OCI-LY7 (cell line): ENCODE measurements at regions of chr20 and their contacts with region 1.

Region 1: DNA sequence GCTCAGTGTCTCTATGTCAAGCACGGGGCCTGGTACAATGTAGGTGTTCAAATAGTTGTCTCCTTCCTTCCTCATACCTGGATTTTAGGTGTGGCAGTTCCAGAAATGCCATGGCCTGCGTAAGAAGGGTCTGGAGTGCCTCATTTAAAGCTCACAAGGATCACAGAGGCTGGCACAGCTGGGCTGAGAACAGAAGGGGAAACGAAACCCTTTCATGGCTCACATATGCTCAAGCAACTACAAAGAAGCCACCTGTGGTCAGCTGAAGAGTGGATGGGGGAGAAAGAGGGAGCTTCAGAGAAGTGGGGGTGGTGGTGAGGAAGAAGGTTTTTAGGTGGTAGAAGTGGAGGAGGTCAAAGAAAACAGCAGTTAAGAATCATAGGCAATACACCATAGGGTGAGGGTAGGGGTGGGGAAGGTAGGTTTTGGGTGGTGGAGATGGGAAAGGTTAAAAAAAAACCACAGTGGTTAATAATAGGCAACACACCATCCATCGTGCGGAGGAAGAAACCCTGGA is 17.0 kb upstream of the TOP1 start:
- DNase-seq: peak; percentile 99
- H3K4me3 ChIP-seq: peak overlapping the region; percentile 60
- H3K27ac ChIP-seq: peak overlapping the region; percentile 99
- H3K4me1 ChIP-seq: peaks cover 89% of the 10 kb centered on the region
- CTCF ChIP-seq: no peak

Region 2: GRCh38 chr20:40781327-40782042 is 230.1 kb before region 1 on chr20:
- CTCF ChIA-PET with region 1: no interaction called
- POLR2A ChIA-PET with region 1: no interaction called
- intact Hi-C with region 1: no loop called
- DNase-seq: no peak
- H3K4me3 ChIP-seq: no peak overlapping the region
- H3K27ac ChIP-seq: no peak overlapping the region
- H3K4me1 ChIP-seq: peaks cover 29% of the 10 kb centered on the region
- CTCF ChIP-seq: no peak

Region 3: GRCh38 chr20:40938020-40938419 is 73.6 kb before region 1 on chr20:
- CTCF ChIA-PET with region 1: no interaction called
- POLR2A ChIA-PET with region 1: no interaction called
- intact Hi-C with region 1: loop called (anchors 5 kb)
- DNase-seq: peak; percentile 45
- H3K4me3 ChIP-seq: no peak overlapping the region
- H3K27ac ChIP-seq: no peak overlapping the region
- H3K4me1 ChIP-seq: peaks cover 70% of the 10 kb centered on the region
- CTCF ChIP-seq: peak; percentile 76

Region 4: DNA sequence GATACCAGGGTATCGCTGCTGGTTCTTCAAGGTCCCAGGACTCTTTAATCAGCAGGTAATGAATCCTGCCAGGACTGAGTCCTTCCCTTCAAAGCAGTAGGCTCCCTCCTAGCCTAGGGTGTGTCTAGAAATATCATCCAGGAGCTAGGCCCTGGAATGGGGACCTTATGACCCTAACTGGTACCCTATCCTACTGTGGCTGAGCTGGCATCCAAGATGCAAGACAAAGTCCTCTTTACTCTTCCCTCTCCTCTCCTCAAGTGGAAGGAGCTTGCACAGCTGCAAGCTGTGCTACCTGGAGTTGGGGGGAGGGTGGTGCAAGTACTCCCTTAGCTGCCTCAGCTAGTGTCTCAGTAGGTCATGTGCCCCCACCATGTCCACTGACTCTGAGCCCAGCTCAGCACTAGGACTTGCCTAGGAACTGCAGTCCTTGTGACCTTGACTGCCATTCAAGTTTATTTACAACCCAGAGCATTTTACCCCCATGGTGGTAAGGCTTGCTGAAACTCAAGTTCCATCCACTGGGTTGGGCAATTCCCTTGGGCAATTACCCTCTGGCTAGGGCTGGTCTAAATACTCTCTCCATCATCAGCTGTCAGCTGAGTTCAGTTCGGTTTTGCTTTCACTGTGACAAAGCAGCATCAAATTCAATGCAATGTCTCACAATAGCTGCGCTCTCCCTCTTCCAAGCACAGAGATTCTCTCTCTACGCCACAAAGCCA is 31.3 kb before region 1 on chr20:
- CTCF ChIA-PET with region 1: interaction called, 3 read pairs
- POLR2A ChIA-PET with region 1: interaction called, 7 read pairs
- intact Hi-C with region 1: loop called (anchors 1 kb)
- DNase-seq: no peak
- H3K4me3 ChIP-seq: no peak overlapping the region
- H3K27ac ChIP-seq: no peak overlapping the region
- H3K4me1 ChIP-seq: peaks cover 45% of the 10 kb centered on the region
- CTCF ChIP-seq: no peak

Region 5: GRCh38 chr20:41023544-41023943 is 11.9 kb after region 1 on chr20:
- CTCF ChIA-PET with region 1: interaction called, 3 read pairs
- POLR2A ChIA-PET with region 1: interaction called, 26 read pairs
- intact Hi-C with region 1: loop called (anchors 2 kb)
- DNase-seq: no peak
- H3K4me3 ChIP-seq: no peak overlapping the region
- H3K27ac ChIP-seq: no peak overlapping the region
- H3K4me1 ChIP-seq: peaks cover 58% of the 10 kb centered on the region
- CTCF ChIP-seq: no peak

Region 6: DNA sequence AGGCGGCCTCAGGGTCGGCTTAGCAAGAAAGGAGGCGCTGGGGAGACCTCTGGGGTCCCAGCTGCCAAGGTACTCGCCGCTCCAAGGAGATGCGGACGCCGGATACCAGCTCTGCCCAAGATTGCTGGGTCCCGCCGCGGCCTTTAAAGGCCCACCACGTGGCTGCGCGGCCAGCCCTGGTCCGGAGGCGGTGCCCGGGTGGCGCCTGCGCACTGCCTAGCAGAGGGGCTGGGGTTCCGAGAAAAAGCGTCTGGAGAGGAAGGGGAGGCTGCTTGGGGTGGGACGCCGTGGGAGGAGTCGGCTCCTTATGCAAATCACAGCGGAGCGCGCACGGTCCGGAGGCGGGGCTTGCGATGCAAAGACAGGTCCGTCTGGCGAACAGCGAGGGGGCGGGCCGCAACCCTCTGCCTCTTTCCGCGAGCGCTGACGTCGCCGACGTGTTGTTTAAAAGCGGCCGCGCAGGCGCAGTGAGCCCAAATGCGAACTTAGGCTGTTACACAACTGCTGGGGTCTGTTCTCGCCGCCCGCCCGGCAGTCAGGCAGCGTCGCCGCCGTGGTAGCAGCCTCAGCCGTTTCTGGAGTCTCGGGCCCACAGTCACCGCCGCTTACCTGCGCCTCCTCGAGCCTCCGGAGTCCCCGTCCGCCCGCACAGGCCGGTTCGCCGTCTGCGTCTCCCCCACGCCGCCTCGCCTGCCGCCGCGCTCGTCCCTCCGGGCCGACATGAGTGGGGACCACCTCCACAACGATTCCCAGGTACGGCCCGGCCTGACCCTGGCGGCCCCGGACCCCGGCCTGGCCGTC is 16.9 kb after region 1 on chr20 and contains the start of gene TOP1:
- CTCF ChIA-PET with region 1: no interaction called
- POLR2A ChIA-PET with region 1: interaction called, 26 read pairs
- intact Hi-C with region 1: loop called (anchors 2 kb)
- DNase-seq: peak; percentile 100
- H3K4me3 ChIP-seq: peak within 1 kb of the TSS; percentile 88
- H3K27ac ChIP-seq: peak within 1 kb of the TSS; percentile 54
- H3K4me1 ChIP-seq: peaks cover 61% of the 10 kb centered on the region
- CTCF ChIP-seq: no peak
- total RNA-seq, gene TOP1: 44.6 and 53.0 TPM in 2 replicates